Esophagus muscularis mucosa (tissue), 4 donors: ENCODE measurements at regions of chr17 and their contacts with region 1.

Region 1: GRCh38 chr17:15406081-15406480 is 61.3 kb downstream of the CDRT4 start:
- DNase-seq: no peak
- H3K4me3 ChIP-seq: no peak overlapping the region
- H3K27ac ChIP-seq: no peak overlapping the region
- H3K4me1 ChIP-seq: peaks cover 8 to 47% (median 44%) of the 10 kb centered on the region in 4 donors
- H3K27me3 ChIP-seq: no peaks in the 10 kb centered on the region
- CTCF ChIP-seq: no peak
- EP300 ChIP-seq: no peak
- POLR2A ChIP-seq: no peak

Region 2: DNA sequence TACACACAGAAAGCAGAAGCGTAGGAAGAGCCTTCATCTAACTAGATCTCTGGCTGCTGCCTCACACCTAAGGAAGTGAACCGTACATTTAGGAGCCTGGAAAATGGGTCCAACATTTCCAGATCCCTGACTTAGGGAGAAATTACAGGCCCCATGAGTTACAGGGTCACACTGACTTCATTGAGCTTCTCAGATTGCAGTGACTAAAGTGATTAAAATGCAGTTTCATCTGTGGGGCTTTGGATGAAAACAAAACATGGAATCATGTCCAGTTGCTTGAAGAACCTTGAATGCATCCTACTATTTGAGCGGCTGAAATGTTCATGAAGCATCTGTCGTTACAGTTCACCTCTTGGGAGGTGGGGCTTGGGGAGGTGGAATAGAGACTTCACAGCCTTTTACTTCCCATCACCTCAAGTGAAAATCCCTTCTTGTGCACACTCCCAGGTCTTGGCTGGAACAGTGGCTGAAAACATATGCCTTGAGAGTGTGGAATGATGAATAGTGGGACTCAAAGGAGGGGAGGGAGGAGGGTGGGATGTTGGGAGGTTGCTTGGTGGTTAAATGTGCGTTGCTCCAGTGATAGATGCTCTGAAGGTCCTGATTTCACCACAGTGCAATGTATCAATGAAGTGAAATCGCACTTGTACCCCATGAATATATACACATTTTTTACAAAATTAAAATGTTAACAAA is 84.4 kb before region 1 on chr17:
- intact Hi-C with region 1: no loop called
- DNase-seq: peak; percentile 64
- H3K4me3 ChIP-seq: no peak overlapping the region
- H3K27ac ChIP-seq: no peak overlapping the region
- H3K4me1 ChIP-seq: no peaks in the 10 kb centered on the region
- H3K27me3 ChIP-seq: no peaks in the 10 kb centered on the region
- CTCF ChIP-seq: no peak
- EP300 ChIP-seq: no peak
- POLR2A ChIP-seq: no peak

Region 3: GRCh38 chr17:15502369-15503112 is 96.5 kb after region 1 on chr17:
- intact Hi-C with region 1: loop called (anchors 2 kb)
- DNase-seq: peak; percentile 97
- H3K4me3 ChIP-seq: peak overlapping the region; percentile 42 to 56 (median 44)
- H3K27ac ChIP-seq: peak overlapping the region; percentile 71 to 85 (median 83)
- H3K4me1 ChIP-seq: peaks cover 18 to 23% (median 19%) of the 10 kb centered on the region in 4 donors
- H3K27me3 ChIP-seq: no peaks in the 10 kb centered on the region
- CTCF ChIP-seq: peak; percentile 88 to 91 (median 89)
- EP300 ChIP-seq: no peak
- POLR2A ChIP-seq: peak; percentile 16